Activated naive CD4-positive, alpha-beta T cell treated with anti-CD3 and anti-CD28 coated beads for 36 hours (primary cell): ENCODE measurements at regions of chr10 and their contacts with region 1.

Region 1: DNA sequence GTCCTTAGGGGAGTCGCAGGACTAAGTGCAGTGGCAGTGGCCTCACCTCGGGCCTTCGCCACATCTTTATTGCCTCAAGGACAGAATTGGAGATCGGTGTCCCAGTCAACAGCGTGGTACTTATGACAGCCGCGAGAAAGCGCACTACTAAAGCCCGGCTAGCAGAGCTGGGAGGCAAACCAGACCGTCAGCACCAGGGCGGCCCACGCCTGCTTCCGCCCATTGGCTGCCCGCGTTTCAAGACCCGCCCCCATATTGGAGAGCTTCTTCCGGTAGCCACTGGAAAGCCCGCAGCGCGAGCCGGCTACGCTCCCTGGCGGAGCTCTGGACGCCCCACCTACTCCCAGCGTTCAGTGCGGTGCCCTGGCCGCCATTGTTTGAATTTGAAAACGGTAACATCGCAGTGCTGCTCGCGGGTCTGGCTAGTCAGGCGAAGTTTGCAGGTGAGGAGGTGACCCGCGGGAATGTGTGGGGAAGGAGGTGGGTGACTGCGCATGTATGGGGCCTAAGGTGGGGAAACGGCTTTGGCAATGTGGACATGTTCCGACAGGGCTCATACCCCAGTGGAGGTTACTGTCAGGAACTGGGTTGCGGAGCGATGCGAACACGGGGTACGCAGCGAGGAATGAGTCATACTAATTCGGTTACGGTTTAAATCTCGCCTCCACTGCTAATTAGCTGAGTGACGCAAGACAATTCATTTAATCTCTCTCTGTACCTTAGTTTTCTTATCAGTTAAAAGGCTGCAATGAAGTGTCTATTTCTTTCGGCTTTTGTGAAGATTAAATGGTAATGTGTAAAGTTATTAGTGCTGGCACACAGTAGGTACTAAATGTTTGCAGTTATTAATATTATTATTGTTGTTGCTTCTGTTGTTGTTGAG is at the start of gene KIF20B:
- DNase-seq: peak; percentile 97
- H3K4me3 Mint-ChIP-seq: peak within 1 kb of the TSS; percentile 90
- H3K27ac Mint-ChIP-seq: peak within 1 kb of the TSS; percentile 97
- H3K4me1 Mint-ChIP-seq: peaks cover 34% of the 10 kb centered on the region
- H3K27me3 Mint-ChIP-seq: no peaks in the 10 kb centered on the region
- total RNA-seq, gene KIF20B: 67.2 to 70.3 TPM

Region 2: GRCh38 chr10:89251409-89252224 is 449.9 kb before region 1 on chr10 and contains the start of gene LIPA:
- CTCF ChIA-PET with region 1: no interaction called
- intact Hi-C with region 1: loop called (anchors 1 kb)
- DNase-seq: peak; percentile 95
- H3K4me3 Mint-ChIP-seq: peak within 1 kb of the TSS; percentile 84
- H3K27ac Mint-ChIP-seq: no peak within 1 kb of the TSS
- H3K4me1 Mint-ChIP-seq: peaks cover 38% of the 10 kb centered on the region
- H3K27me3 Mint-ChIP-seq: no peaks in the 10 kb centered on the region
- total RNA-seq, gene LIPA: 16.1 to 17.2 TPM

Region 3: DNA sequence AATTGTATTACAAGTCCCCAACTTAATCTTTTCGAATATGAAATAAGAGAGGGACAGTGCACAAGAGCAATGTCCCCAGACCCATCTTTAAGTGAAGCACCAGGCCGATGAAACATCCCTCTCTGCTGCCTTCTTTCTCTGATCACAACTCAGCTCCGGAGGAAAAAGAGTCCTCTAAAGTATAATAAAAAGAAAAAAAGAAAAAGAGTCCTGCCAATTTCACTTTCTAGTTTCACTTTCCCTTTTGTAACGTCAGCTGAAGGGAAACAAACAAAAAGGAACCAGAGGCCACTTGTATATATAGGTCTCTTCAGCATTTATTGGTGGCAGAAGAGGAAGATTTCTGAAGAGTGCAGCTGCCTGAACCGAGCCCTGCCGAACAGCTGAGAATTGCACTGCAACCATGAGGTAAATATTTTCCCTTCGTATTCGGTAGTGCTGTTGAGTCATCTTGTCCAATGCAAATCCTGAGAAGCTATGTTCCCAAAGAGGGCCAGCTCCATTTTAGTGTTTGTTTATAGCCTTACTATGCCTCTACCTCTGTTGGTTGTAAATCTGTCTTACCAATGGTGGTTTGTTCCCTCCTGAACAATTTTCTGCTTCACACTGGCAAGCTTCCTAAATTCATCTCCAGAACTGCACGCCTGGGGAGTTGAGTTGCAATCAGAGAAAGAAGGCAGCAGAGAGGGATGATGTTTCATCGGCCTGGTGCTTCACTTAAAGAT is 399.6 kb before region 1 on chr10 and contains the start of gene IFIT2:
- CTCF ChIA-PET with region 1: no interaction called
- intact Hi-C with region 1: loop called (anchors 1 kb)
- DNase-seq: peak; percentile 22
- H3K4me3 Mint-ChIP-seq: peak within 1 kb of the TSS; percentile 79
- H3K27ac Mint-ChIP-seq: peak within 1 kb of the TSS; percentile 65
- H3K4me1 Mint-ChIP-seq: peaks cover 32% of the 10 kb centered on the region
- H3K27me3 Mint-ChIP-seq: no peaks in the 10 kb centered on the region
- total RNA-seq, gene IFIT2: 35.7 to 39.4 TPM

Region 4: DNA sequence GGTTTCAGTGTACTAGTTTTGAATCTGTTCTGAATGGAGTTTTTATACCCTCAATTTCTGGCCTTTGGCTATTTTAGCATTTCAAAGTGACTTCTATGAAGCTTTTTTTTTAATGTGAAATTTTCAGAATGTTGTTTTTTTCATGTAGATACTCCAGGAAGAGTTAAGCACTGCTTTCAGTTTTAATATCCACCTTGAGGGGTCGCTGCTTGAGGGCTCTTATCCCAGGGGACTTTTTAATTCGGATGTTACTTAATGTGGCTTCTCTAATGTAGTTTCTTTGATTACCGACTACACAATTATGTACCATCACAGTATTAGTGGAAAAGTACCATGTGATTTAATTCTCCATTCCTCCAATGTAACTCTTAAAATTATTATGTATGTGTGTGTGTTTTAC is 281.9 kb before region 1 on chr10:
- CTCF ChIA-PET with region 1: interaction called, 3 read pairs
- intact Hi-C with region 1: loop called (anchors 2 kb)
- DNase-seq: peak; percentile 28
- H3K4me3 Mint-ChIP-seq: no peak overlapping the region
- H3K27ac Mint-ChIP-seq: no peak overlapping the region
- H3K4me1 Mint-ChIP-seq: peaks cover 35% of the 10 kb centered on the region
- H3K27me3 Mint-ChIP-seq: no peaks in the 10 kb centered on the region

Region 5: GRCh38 chr10:89553064-89553734 is 148.3 kb before region 1 on chr10:
- CTCF ChIA-PET with region 1: no interaction called
- intact Hi-C with region 1: no loop called
- DNase-seq: no peak
- H3K4me3 Mint-ChIP-seq: no peak overlapping the region
- H3K27ac Mint-ChIP-seq: no peak overlapping the region
- H3K4me1 Mint-ChIP-seq: no peaks in the 10 kb centered on the region
- H3K27me3 Mint-ChIP-seq: peaks cover 4% of the 10 kb centered on the region

Region 6: DNA sequence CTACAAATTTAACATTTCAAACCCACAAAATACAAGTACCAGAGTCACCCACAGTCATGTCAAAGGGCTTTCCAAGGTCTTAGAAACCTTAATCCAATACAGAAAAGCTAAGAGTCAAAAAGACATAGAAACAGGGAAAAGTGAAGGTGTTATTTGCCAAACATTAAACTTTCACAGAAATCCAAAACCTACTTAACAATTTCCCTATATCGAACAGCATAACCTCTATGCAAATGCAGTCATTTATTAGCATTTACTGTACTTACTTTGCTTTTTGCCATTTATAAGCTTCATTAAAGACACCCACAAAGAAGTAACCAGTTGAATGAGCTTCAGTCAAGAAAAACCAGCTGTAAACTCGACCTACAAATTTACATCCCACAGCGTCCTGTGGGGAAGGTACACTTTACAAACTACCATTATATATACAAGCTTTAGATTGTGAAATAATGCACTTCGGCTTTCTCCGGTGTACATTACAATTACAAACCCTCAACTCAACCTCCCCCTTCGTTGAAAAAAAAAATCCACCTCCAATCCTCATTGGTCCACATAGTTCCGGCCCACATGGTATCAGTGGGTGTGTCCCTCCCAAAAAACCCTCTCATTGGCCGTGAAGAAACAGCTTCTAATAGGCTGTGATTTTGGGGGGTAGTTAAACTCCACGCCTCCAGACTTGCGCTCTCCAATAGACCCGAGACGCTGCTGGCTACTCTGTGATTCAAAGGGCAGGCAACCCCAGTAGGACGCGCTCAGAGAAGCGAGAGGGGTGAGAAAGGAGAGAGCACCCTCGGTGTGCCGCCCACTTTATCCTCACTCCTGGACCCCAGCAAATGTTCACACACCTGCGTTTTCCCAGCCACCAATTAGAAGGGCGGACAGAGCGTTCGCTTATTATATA is 57.8 kb before region 1 on chr10:
- CTCF ChIA-PET with region 1: no interaction called
- intact Hi-C with region 1: loop called (anchors 1 kb)
- DNase-seq: peak; percentile 79
- H3K4me3 Mint-ChIP-seq: no peak overlapping the region
- H3K27ac Mint-ChIP-seq: no peak overlapping the region
- H3K4me1 Mint-ChIP-seq: peaks cover 8% of the 10 kb centered on the region
- H3K27me3 Mint-ChIP-seq: peaks cover 4% of the 10 kb centered on the region

Region 7: DNA sequence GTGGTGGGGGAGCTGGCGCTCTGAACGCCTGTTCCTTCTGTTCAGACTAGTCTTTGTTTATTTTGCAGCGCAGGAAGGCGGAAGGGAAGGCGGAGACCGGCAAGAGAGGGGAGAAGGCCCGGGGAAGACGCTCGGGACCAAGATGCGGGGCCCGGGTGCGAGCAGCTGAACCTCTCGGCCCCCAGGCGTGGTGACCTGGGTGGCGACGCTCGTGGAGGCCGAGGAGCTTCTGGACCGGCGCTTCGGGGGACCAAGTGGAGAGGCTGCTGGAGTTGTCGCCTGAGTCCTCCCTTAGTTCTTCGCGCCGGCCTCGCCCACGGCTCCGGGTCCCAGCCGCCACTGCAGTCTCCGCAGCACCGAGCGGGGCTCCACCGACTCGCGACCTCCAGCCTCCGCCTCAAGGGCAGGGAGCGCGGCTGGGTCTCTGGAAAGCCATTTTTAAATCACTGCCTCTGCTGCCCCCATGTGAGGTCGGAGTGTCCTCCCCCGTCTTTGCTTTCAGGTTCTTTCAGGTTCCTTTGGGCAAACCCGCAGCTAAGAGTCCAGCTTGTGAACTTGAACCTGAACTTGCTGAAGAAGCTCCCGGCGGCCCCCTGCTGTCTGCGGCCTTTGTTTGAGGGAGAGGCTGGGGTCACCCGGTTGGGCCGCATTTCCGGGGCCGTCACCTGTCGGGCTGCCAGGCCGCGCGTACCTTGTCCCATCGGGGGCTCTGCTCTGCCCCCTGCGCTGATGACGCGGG is 135.8 kb after region 1 on chr10:
- CTCF ChIA-PET with region 1: no interaction called
- intact Hi-C with region 1: loop called (anchors 1 kb)
- DNase-seq: peak; percentile 29
- H3K4me3 Mint-ChIP-seq: peak overlapping the region; percentile 76
- H3K27ac Mint-ChIP-seq: no peak overlapping the region
- H3K4me1 Mint-ChIP-seq: peaks cover 8% of the 10 kb centered on the region
- H3K27me3 Mint-ChIP-seq: peaks cover 9% of the 10 kb centered on the region